ENCODE measurements at regions of chr7 and their contacts with region 1.

Region 1: GRCh38 chr7:628826-629225 is 97.7 kb upstream of the DNAAF5 start:
- DNase-seq: peak; percentile 58

Region 2: DNA sequence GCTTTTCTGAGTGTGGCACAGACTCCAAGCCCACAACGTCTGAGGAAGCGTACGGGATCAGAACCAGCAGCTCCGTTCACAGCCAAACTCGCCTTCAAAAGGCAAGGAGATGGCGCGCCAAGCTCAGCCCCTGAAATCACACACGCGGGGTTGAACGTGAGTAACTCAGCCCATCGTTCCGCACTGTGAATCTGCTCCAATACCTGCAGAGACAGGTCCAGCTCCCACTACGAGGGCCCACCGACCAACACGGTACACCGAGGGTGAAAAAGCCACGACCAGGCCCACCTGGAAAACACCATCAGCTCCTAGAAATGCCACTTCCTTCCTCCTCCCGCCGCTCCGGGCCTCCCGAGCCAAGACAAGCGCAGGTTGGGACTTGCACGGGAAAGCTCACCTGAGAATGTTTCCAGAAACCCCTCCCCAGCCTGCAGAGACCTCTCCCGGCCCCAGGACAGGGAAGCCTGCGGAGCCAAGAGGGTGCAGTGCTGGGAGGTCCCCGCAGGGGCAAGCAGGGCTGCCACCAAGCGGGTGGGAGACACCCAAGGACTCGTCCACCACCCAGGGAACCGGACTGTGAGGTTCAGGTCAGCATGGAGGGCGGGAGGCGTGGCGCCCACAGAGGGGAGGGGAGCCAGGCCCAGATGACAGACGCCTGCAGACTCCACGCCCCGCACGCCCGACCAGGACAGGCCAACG is 15.2 kb before region 1 on chr7:
- intact Hi-C with region 1: loop called in 1 of 2 experiments (anchors 1 kb)
- DNase-seq: no peak

Region 3: GRCh38 chr7:1520574-1521234 is 891.9 kb after region 1 on chr7:
- intact Hi-C with region 1: no loop called
- DNase-seq: no peak

Measured in posterior vena cava (tissue), 2 donors.